WTC11 (cell line): ENCODE measurements at regions of chr16 and their contacts with region 1.

Region 1: GRCh38 chr16:88737298-88738150 is 31.2 kb downstream of the CTU2 start:
- DNase-seq: peak; percentile 81
- ATAC-seq: peak; percentile 86
- H3K4me3 Mint-ChIP-seq: no peak overlapping the region
- H3K27ac Mint-ChIP-seq: no peak overlapping the region
- H3K4me1 Mint-ChIP-seq: no peaks in the 10 kb centered on the region
- H3K27me3 Mint-ChIP-seq: no peaks in the 10 kb centered on the region
- CTCF ChIP-seq: peak; percentile 99

Region 2: DNA sequence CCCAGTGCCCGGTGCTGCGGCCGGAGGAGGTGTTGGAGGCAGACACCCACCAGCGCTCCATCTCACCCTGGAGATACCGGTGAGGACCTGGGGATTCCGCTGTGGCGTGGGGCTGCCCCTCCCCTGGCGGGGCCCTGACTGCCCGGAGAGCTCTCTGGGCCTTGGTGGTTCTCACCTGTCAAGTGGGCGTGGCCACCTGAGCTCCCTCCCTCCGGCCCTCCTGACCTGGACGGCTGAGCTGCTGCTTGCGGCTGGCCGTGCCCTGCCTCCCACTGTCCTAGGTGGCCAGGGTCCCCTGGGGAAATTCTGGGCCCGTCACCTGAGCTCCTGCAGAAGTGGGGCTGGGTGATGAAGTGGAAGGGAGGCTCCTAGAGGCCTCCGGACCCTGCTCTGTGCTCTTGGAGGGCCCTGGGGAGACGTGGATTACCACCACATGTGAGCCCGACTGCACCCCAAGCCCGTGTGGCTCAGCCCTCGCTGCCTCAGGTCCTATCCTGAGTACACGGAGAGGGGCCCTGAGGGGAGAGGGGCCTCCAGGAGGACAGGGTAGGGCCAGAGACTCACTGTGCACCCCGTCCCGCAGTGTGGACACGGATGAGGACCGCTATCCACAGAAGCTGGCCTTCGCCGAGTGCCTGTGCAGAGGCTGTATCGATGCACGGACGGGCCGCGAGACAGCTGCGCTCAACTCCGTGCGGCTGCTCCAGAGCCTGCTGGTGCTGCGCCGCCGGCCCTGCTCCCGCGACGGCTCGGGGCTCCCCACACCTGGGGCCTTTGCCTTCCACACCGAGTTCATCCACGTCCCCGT is 98.1 kb before region 1 on chr16:
- CTCF ChIA-PET with region 1: interaction called, 18 read pairs
- POLR2A ChIA-PET with region 1: no interaction called
- DNase-seq: peak; percentile 89
- ATAC-seq: peak; percentile 61
- H3K4me3 Mint-ChIP-seq: peak overlapping the region; percentile 33; the same call in 1 of the 2 replicates
- H3K27ac Mint-ChIP-seq: no peak overlapping the region
- H3K4me1 Mint-ChIP-seq: peaks cover 38% of the 10 kb centered on the region
- H3K27me3 Mint-ChIP-seq: peaks cover 22% of the 10 kb centered on the region
- CTCF ChIP-seq: no peak

Region 3: DNA sequence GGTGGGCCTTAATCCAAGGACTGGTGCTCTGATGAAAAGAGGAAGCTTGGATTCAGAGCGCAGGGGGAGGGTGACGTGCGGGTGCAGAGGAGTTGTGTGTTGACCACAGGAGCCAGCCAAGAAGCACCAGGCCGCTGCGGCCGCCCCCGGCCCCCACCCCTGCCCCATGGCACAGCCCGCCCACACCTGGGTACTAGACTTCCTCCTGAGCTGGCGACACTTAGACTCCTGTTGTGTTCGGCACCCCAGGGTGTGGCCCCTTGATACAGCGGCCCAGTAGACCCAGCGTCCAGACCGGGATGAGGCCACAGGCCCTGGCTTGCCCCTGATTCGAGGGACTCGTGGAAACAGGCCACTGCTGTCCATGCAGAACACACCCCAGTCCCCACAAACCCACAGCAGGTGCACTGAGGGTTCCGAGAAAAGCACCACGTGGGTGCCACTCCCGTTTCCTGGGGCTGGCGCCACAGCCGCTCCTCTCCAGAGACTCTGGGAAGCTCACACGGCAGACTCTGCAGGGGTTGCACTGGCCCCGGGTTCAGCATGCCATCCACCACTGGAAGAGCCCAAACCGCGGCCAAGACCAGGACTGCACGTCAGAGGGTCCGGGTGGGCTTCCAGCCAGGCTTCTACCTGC is 45.5 kb before region 1 on chr16:
- CTCF ChIA-PET with region 1: interaction called, 32 read pairs
- POLR2A ChIA-PET with region 1: no interaction called
- DNase-seq: no peak
- ATAC-seq: no peak
- H3K4me3 Mint-ChIP-seq: no peak overlapping the region
- H3K27ac Mint-ChIP-seq: no peak overlapping the region
- H3K4me1 Mint-ChIP-seq: peaks cover 6% of the 10 kb centered on the region; the same call in 1 of the 2 replicates
- H3K27me3 Mint-ChIP-seq: peaks cover 23% of the 10 kb centered on the region
- CTCF ChIP-seq: no peak

Region 4: DNA sequence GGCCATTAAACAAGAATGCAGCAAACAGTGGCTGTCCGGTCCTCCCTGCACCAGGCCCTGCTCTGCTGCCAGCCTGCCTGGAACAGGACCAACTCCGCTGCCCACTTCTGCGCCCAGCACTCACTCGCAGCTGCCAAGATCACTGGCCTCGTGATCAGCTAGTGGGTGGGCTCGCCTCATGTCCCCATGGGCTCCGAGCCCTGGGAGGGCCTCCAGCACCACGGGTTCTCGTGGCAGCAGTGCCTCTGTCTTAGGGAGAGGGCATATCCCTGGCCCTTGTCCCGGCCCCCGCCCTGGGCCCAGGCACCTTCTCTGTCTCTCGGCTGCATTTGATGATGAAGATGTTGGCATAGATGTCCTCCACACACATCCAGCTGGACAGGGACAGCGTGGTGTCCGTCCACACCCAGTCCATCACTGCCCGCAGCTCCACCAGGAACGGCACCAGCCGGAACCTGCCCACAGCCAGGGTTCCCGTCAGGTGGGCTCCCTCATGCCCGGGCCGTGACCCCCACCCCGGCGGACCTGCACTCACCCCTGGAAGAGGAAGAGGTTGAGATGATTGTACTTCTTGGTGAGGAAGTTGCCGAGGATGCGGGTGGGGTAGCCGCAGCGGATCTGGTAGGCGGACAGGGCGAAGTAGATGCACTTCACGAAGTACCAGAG is 18.1 kb before region 1 on chr16:
- CTCF ChIA-PET with region 1: interaction called, 41 read pairs
- POLR2A ChIA-PET with region 1: no interaction called
- DNase-seq: no peak
- ATAC-seq: no peak
- H3K4me3 Mint-ChIP-seq: no peak overlapping the region
- H3K27ac Mint-ChIP-seq: no peak overlapping the region
- H3K4me1 Mint-ChIP-seq: no peaks in the 10 kb centered on the region
- H3K27me3 Mint-ChIP-seq: no peaks in the 10 kb centered on the region
- CTCF ChIP-seq: no peak

Region 5: GRCh38 chr16:88785106-88785924 is 47.8 kb after region 1 on chr16 and contains the start of gene PIEZO1:
- CTCF ChIA-PET with region 1: interaction called, 117 read pairs
- POLR2A ChIA-PET with region 1: interaction called, 3 read pairs
- DNase-seq: peak; percentile 53
- ATAC-seq: peak; percentile 40
- H3K4me3 Mint-ChIP-seq: peak within 1 kb of the TSS; percentile 73
- H3K27ac Mint-ChIP-seq: no peak within 1 kb of the TSS
- H3K4me1 Mint-ChIP-seq: peaks cover 16% of the 10 kb centered on the region
- H3K27me3 Mint-ChIP-seq: 0 out of 2 replicates have a peak, but pooled peaks cover 3% of the 10 kb centered on the region
- CTCF ChIP-seq: no peak
- total RNA-seq, gene PIEZO1: 68.3 to 75.1 TPM (median 71.3 TPM) in 3 replicates

Region 6: DNA sequence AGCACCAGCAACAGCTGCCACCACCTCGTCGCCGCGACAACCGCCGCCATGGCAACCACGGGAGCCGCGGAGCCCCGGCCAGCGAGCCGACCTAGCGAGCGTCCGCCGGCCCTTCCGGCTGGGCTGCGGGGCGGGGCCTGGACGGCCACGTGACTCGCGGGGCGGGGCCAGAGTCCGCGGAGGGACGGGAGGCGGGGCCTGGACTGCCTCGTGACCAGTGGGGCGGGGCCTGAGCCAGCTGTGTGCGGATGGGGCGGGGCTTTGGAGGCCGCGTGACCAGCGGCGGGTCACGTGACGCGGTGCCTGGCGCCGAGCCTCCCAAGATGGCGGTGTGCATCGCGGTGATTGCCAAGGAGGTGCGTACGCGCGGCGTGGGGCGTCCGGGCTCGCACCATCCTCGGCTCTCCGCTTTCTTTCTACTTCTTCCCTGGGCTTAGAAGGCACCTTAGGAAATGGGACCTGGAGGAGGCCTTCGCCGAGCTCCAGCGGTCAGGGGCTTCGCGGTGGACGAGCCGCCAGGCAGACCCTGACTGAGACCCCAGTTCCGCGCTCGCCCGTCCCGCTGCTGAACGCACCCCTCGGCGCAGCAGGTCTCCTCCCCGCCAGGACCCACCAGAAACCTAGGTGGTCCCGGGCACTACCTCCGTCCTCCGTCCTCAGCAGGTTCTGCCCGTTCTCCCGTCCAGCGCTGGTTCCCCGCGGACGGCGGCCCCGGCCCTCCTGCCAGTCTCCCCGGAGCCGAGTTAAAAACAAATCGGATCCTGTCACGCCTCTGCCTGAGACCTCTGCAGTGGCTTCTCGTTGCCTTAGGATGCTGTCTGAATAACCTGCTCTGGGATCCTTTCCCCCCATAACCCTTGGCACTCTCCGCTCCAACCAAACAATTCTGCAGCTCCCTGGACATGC is 119.6 kb after region 1 on chr16 and contains the starts of genes GALNS and TRAPPC2L:
- CTCF ChIA-PET with region 1: interaction called, 10 read pairs
- POLR2A ChIA-PET with region 1: no interaction called
- DNase-seq: peak; percentile 99
- ATAC-seq: peak; percentile 88
- H3K4me3 Mint-ChIP-seq: peak within 1 kb of the TSS; percentile 99
- H3K27ac Mint-ChIP-seq: peak within 1 kb of the TSS; percentile 94
- H3K4me1 Mint-ChIP-seq: peaks cover 20% of the 10 kb centered on the region
- H3K27me3 Mint-ChIP-seq: no peaks in the 10 kb centered on the region
- CTCF ChIP-seq: no peak
- total RNA-seq, gene GALNS: 23.0 to 29.5 TPM (median 25.8 TPM) in 3 replicates
- total RNA-seq, gene TRAPPC2L: 63.1 to 82.0 TPM (median 64.5 TPM) in 3 replicates

Region 7: DNA sequence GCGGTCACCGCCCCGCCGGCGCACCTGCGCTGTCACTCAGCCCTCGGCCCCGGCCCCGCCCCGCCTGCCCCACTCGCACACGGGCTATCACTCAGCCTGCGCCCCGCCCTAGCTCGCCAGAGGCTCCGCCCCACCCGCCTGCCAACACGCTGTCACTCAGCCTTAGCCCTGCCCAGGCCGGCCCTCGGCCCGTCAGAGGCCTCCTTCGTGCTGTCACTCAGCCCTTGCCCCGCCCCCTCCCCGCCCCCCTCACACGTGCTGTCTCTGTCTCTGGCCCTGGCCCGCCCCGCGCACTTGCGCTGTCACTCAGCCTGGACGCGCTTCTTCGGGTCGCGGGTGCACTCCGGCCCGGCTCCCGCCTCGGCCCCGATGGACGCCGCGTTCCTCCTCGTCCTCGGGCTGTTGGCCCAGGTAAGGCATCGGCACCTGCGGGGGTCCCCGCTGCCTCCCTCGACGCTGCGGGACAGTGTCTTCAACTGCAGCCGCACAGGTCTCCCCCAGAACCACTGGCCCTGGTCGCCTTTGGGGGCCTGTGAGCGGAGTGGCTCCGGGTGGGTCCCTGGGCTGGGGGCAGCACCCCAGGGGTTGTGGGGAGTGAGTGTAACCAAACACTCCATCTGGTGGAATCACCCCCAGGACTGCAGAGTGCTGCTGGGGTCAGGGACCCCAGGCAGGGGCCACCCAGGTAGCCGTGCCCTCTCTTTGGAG is 434.1 kb after region 1 on chr16 and contains the start of gene CDH15:
- CTCF ChIA-PET with region 1: interaction called, 36 read pairs
- POLR2A ChIA-PET with region 1: no interaction called
- DNase-seq: peak; percentile 99
- ATAC-seq: peak; percentile 88
- H3K4me3 Mint-ChIP-seq: peak within 1 kb of the TSS; percentile 75
- H3K27ac Mint-ChIP-seq: 0 out of 2 replicates have a peak within 1 kb of the TSS, but pooled peaks have one; percentile 2
- H3K4me1 Mint-ChIP-seq: peaks cover 14% of the 10 kb centered on the region
- H3K27me3 Mint-ChIP-seq: peaks cover 6% of the 10 kb centered on the region; the same call in 1 of the 2 replicates
- CTCF ChIP-seq: no peak
- total RNA-seq, gene CDH15: 0.41 to 0.76 TPM (median 0.46 TPM) in 3 replicates